ENCODE measurements at regions of chr9 and their contacts with region 1.

Region 1: DNA sequence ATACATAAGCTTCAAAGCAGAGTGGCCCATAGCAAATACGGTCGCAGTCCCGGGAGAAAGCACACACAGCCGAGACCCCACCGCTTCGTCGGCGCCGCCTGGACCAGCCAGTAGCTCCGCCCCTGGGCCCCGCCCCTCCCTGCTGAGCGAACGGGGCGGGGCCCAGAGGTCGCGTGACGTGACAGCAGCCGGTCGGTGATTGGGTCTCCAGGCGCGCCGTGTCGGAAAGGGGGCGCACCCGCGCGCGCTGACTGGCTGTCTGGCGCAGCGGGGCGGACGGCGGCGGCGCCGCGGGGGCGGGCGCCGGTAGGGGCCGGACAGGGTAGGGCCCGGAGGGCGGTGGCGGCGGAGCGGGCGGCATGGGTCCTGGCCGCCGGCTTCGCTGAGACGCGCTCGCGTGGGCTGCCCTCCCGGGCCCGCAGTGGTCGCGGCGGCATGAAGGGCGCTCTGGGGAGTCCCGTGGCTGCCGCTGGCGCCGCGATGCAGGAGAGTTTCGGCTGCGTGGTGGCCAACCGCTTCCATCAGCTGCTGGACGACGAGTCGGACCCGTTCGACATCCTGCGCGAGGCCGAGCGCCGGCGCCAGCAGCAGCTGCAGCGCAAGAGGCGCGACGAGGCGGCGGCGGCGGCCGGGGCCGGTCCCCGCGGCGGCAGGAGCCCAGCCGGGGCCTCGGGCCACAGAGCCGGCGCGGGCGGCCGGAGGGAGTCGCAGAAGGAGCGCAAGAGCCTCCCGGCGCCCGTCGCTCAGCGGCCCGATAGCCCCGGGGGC is at the start of gene HABP4:
- DNase-seq: peak; percentile 96 to 99 (median 97)
- H3K4me3 ChIP-seq: peak within 1 kb of the TSS; percentile 65
- H3K27ac ChIP-seq: peak within 1 kb of the TSS; percentile 13 to 82
- H3K4me1 ChIP-seq: no peaks in the 10 kb centered on the region
- H3K27me3 ChIP-seq: no peaks in the 10 kb centered on the region
- CTCF ChIP-seq: peak in 1 of 3 donors; percentile 33
- EP300 ChIP-seq: no peak
- POLR2A ChIP-seq: peak; percentile 86
- total RNA-seq, gene HABP4: 10.3 to 23.4 (median 19.2) TPM

Region 2: DNA sequence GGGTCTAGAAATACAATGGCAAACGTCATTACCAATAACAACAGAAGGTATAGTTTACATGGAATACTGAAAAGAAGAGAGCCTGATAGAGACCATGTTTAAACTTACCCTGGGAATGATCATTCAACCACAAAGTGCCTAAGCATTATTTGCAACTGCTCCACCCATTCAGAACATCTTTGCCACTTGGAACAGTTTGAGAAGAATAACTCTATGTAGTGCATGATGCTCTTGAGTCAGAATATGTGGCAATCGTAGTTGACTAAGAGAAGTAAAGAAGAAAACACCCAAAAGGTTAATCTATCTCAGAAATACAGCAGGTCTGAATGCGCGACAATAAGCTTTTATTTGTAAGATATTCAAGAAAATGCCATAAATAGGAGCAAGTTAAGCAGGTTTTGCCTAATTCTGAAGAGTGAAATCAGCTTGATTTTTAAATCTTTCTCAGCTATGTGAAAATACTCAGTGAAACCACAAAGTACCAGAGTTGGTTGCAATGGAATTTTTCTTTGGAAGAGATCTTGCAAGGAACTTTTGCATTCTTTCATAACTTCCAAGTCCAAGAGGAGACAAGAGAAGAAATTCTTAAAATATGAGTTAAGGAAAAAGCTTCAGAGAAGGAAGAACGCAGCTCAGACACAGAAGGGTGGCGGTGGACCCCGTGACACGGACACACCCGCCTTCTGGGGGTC is 64.2 kb after region 1 on chr9:
- intact Hi-C with region 1: loop called in 1 of 4 experiments (anchors 10 kb)
- DNase-seq: no peak
- H3K4me3 ChIP-seq: no peak overlapping the region
- H3K27ac ChIP-seq: no peak overlapping the region
- H3K4me1 ChIP-seq: peaks cover 3% of the 10 kb centered on the region
- H3K27me3 ChIP-seq: no peaks in the 10 kb centered on the region
- CTCF ChIP-seq: no peak
- EP300 ChIP-seq: no peak
- POLR2A ChIP-seq: no peak

Region 3: DNA sequence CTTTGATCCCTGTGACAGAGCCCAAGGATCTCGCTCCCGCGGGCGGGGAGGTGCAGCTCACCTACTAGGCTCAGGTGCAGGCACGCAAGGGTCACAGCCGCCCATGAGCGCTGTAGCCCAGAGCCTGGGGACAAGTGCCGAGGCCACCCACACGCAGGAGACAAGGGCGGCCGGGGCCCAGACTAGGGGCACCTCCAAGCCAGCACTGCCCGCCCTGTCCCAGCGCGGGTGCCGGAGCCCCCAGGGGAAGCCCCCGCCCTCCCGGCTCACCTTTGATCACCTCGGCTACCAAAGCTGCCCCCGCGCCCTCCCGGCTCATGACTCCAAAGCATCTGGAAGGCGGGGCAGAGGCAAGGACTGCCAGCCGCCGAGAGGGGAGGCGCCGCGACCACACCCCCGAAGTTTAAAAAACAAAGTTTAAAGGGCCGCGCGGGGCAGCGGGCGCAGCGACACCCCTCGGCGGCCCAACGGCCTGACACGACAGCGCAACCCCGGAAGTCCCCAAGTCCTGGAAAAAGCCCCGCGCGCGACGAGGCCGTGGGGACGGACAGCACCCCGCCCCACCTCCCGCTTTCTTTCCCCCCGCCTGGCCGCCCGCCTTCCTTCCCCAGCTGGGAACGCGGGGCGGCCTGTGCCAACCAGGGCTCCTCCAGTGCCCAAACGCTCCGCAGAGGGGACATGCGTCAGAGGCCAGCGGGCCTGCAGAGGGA is 116.6 kb after region 1 on chr9:
- intact Hi-C with region 1: loop called in 1 of 4 experiments (anchors 2 kb)
- DNase-seq: peak; percentile 49 to 77 (median 61)
- H3K4me3 ChIP-seq: peak overlapping the region; percentile 64
- H3K27ac ChIP-seq: peak overlapping the region; percentile 62 to 83
- H3K4me1 ChIP-seq: no peaks in the 10 kb centered on the region
- H3K27me3 ChIP-seq: no peaks in the 10 kb centered on the region
- CTCF ChIP-seq: peak in 1 of 3 donors; percentile 33
- EP300 ChIP-seq: no peak
- POLR2A ChIP-seq: no peak

Region 4: GRCh38 chr9:96667361-96667728 is 217.3 kb after region 1 on chr9:
- intact Hi-C with region 1: no loop called
- DNase-seq: no peak
- H3K4me3 ChIP-seq: no peak overlapping the region
- H3K27ac ChIP-seq: no peak overlapping the region
- H3K4me1 ChIP-seq: no peaks in the 10 kb centered on the region
- H3K27me3 ChIP-seq: no peaks in the 10 kb centered on the region
- CTCF ChIP-seq: no peak
- EP300 ChIP-seq: no peak
- POLR2A ChIP-seq: no peak

Region 5: DNA sequence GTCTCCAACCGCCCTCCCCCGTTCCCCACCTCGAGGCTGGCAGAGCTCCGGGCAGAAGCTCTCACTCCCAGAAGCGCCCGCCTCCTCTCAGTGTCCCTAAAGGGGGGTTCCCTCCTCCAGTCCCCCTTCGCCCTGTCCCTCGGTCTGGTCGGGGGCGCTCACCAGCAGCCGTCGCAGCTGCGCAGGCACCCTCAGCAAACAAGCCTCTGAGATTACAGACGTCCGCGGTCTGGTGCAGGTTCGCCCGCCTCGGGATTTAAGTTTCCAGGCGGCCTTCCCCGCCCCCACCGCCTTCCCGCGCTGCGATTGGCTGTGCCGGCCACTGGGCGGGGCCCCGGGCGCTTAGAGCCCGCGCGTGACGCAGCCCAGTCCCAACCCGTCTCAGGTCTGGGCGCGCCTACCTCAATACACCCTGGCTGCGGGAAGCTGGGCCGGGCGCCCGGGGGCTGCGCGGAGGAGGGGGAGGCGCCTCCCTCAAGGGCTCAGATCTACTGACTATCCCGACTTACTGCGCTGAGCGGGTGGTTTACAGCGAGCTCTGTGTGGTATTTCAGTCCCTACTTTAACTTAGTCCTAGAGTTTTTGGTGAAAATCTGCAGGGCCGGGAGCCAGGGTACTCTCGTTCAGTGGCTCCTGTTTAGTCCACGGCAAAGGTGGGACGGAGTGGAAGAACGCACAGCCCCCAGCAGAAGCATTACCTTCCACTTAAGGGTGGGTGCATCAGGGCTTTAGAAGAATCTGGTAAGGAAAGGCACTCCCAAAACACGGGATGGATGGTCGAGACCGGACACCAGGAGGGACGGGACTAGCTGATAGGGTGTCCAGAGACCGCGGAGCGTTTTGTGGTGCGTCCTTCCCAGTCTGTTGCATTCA is 589.1 kb after region 1 on chr9 and contains the start of gene CTSV:
- intact Hi-C with region 1: no loop called
- DNase-seq: peak; percentile 13 to 72 (median 38)
- H3K4me3 ChIP-seq: peak within 1 kb of the TSS; percentile 39
- H3K27ac ChIP-seq: no peak within 1 kb of the TSS
- H3K4me1 ChIP-seq: peaks cover 5% of the 10 kb centered on the region
- H3K27me3 ChIP-seq: no peaks in the 10 kb centered on the region
- CTCF ChIP-seq: no peak
- EP300 ChIP-seq: no peak
- POLR2A ChIP-seq: no peak
- total RNA-seq, gene CTSV: 0.30 to 6.4 (median 1.1) TPM in 4 of 7 donors, not detected in the others

Measured in ovary (tissue), 10 donors.